Activated naive CD4-positive, alpha-beta T cell treated with anti-CD3 and anti-CD28 coated beads for 36 hours (primary cell): ENCODE measurements at regions of chr16 and their contacts with region 1.

Region 1: GRCh38 chr16:22424161-22424937 is 49.9 kb upstream of the CDR2 start:
- DNase-seq: no peak
- H3K4me3 Mint-ChIP-seq: no peak overlapping the region
- H3K27ac Mint-ChIP-seq: no peak overlapping the region
- H3K4me1 Mint-ChIP-seq: peaks cover 3% of the 10 kb centered on the region
- H3K27me3 Mint-ChIP-seq: no peaks in the 10 kb centered on the region

Region 2: DNA sequence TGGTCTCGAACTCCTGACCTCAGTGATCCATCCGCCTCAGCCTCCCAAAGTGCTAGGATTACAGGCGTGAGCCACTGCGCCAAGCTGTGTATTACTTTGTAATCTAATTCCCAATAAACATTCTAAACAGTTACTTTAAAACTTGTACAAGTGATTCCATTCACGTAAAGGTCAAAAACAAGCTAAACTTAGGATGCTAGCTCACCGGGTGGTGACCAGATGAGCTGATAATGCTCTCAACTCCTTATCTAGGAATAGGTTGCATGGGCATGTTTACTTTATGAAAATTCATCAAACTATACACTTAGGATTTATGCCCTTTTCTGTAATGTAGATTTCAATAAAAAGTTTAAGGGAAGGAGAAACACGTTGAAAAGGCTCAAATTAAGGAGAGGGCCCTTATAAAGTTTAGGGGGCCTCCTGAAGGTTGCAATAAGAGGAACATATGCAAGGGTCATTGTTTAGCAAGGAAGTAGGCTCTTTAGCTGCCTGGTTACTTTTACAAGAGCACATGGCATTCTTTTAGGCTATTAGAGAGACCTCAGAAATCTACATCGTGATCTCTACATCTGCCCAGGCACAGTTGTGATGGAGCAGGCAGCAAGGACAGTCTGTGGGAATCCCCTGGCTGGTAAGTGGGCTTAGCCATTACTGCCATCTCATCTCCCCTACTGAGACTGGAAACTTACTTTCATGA is 63.2 kb before region 1 on chr16:
- CTCF ChIA-PET with region 1: no interaction called
- intact Hi-C with region 1: no loop called
- DNase-seq: peak; percentile 25
- H3K4me3 Mint-ChIP-seq: no peak overlapping the region
- H3K27ac Mint-ChIP-seq: peak overlapping the region; percentile 80
- H3K4me1 Mint-ChIP-seq: peaks cover 70% of the 10 kb centered on the region
- H3K27me3 Mint-ChIP-seq: no peaks in the 10 kb centered on the region

Region 3: GRCh38 chr16:22380529-22380928 is 43.8 kb before region 1 on chr16:
- CTCF ChIA-PET with region 1: no interaction called
- intact Hi-C with region 1: loop called (anchors 2 kb)
- DNase-seq: no peak
- H3K4me3 Mint-ChIP-seq: no peak overlapping the region
- H3K27ac Mint-ChIP-seq: peak overlapping the region; percentile 38
- H3K4me1 Mint-ChIP-seq: peaks cover 23% of the 10 kb centered on the region
- H3K27me3 Mint-ChIP-seq: no peaks in the 10 kb centered on the region